Gastrocnemius medialis (tissue), 4 donors: ENCODE measurements at regions of chr10 and their contacts with region 1.

Region 1: GRCh38 chr10:4663162-4663904 is 162.7 kb upstream of the AKR1E2 start:
- DNase-seq: peak; percentile 94 to 95
- ATAC-seq: peak; percentile 78 to 83
- H3K4me3 ChIP-seq: peak overlapping the region in 3 of 4 donors; percentile 5 to 28 (median 22)
- H3K27ac ChIP-seq: peak overlapping the region; percentile 91 to 99 (median 96)
- H3K4me1 ChIP-seq: peaks cover 41 to 51% of the 10 kb centered on the region in 2 donors
- H3K27me3 ChIP-seq: no peaks in the 10 kb centered on the region
- CTCF ChIP-seq: no peak
- POLR2A ChIP-seq: peak; percentile 66 to 77

Region 2: DNA sequence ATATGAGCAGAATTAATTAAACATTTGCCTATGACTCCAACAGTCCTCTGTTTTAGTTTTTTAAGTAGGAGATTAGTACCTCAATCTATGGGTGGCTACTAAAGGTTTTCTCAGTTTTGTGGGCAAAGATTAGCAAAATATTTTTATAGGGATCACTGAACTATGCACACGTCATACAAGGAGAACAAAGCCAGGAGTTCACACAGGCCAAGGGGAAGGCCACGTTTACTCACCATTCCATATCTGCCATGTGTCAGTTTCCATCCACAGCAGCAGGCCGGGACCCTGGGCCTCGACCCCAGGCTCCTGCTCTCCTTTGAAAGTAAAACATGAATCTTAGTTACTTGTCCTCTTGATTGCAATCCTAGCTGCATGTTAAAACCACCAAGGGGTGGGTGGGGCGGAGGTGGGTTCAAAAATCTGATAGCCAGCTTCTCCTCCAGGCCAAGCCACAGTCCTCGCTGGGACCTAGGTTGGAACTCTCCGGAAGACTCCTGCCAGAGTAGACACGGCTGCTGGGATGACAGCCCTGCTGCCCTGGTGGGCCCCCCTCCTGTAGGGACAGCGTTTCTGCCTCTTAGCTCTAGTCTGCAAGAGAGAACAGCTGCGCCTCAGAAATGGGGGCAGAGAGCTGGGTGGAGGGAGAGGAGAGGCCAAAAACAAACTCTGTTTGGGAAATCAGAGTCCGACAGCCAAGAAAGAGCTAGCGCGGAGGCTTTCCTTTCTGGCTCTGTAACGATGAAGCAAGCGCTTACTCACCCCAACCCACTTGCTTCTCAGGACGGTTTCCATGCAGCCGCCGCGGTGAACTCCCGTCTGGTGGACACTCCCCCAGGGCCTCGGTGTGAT is 1526.3 kb before region 1 on chr10:
- in situ Hi-C with region 1: no loop called
- intact Hi-C with region 1: loop called (anchors 10 kb)
- DNase-seq: peak; percentile 68 to 94
- ATAC-seq: peak; percentile 90 to 95
- H3K4me3 ChIP-seq: peak overlapping the region; percentile 5 to 26 (median 15)
- H3K27ac ChIP-seq: peak overlapping the region; percentile 81 to 94 (median 87)
- H3K4me1 ChIP-seq: peaks cover 21 to 22% of the 10 kb centered on the region in 2 donors
- H3K27me3 ChIP-seq: no peaks in the 10 kb centered on the region
- CTCF ChIP-seq: no peak
- POLR2A ChIP-seq: peak in 1 of 2 donors; percentile 36

Region 3: GRCh38 chr10:3570855-3571266 is 1092.5 kb before region 1 on chr10:
- in situ Hi-C with region 1: no loop called
- intact Hi-C with region 1: loop called (anchors 2 kb)
- DNase-seq: peak; percentile 15 to 65
- ATAC-seq: peak in 1 of 2 donors; percentile 29
- H3K4me3 ChIP-seq: no peak overlapping the region
- H3K27ac ChIP-seq: peak overlapping the region; percentile 16 to 63 (median 36)
- H3K4me1 ChIP-seq: peaks cover 42 to 63% of the 10 kb centered on the region in 2 donors
- H3K27me3 ChIP-seq: no peaks in the 10 kb centered on the region
- CTCF ChIP-seq: no peak
- POLR2A ChIP-seq: no peak

Region 4: DNA sequence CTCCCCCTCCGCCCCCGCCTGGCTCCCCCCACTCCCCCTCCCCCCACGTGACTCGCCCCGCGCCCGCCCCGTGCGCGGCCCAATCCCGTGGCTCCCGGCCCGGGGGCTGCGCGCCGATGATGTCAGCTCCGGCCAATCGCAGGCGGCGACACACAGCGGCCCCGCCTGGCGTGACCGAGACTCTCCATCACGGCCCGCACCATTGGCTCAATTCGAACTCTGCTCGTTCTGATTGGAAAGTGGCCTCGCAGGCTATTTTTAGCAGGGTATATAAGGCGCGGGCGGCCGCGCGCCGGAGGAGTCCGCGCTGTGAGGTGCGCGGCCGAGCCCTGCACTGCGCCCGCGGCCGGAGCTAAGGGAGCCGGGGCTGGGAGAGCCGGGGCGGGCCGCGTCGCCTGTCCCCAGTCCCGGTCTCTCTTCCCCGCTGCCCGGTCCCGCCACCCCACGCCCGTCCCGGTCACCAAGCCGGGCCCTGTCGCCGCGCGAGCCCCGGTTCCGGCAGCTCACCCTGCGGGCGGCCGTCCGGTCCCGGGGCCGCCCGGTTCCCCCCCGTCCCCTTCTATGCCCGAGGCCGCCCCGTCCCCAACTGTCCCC is 878.0 kb before region 1 on chr10:
- in situ Hi-C with region 1: loop called in 1 of 4 experiments (anchors 5 kb)
- intact Hi-C with region 1: loop called (anchors 2 kb)
- DNase-seq: peak; percentile 99
- ATAC-seq: peak; percentile 55 to 62
- H3K4me3 ChIP-seq: peak overlapping the region; percentile 83 to 94 (median 90)
- H3K27ac ChIP-seq: peak overlapping the region; percentile 97 to 100 (median 100)
- H3K4me1 ChIP-seq: peaks cover 11 to 18% of the 10 kb centered on the region in 2 donors
- H3K27me3 ChIP-seq: no peaks in the 10 kb centered on the region
- CTCF ChIP-seq: peak in 2 of 5 experiments; percentile 14 to 34
- POLR2A ChIP-seq: peak; percentile 100

Region 5: DNA sequence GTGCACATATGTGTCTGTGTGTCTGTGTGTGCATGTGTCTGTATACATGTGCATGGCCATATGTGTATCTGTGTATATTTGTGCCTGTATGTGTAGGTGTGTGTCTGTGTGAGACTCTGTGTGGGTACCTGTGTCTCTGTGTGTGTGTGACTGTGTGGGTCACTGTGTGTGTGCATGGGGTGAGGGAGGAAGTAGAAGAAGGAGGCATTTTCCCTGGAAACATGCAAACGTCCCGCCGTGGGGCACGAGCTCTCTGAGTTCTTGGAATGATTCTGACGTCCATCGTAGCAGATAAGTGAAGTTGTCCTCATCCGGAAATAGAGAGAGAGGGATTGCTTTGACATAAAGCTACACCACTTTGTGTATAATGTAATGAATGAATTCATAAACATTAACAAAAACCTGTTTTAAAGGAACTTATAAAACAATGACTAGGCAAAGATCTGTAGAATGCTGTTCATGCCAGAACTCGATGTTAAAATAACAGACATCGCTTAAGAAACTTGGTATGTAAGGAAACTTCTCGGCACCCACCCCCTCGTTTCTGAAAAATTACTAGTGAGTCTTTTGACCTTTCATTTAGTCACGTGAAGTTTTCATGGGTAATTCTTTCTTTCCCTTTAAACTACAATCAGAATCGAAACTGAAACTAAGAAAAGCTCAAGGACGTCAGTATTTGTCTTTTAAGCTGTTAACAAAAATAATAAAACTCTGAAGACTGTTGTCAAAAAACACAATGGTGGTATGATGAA is 834.8 kb before region 1 on chr10:
- in situ Hi-C with region 1: loop called in 1 of 4 experiments (anchors 25 kb)
- intact Hi-C with region 1: loop called (anchors 5 kb)
- DNase-seq: no peak
- ATAC-seq: no peak
- H3K4me3 ChIP-seq: peak overlapping the region; percentile 50 to 62 (median 58)
- H3K27ac ChIP-seq: peak overlapping the region; percentile 73 to 92 (median 89)
- H3K4me1 ChIP-seq: peaks cover 33 to 36% of the 10 kb centered on the region in 2 donors
- H3K27me3 ChIP-seq: no peaks in the 10 kb centered on the region
- CTCF ChIP-seq: no peak
- POLR2A ChIP-seq: no peak

Region 6: GRCh38 chr10:4120096-4120853 is 543.1 kb before region 1 on chr10:
- in situ Hi-C with region 1: no loop called
- intact Hi-C with region 1: no loop called
- DNase-seq: no peak
- ATAC-seq: no peak
- H3K4me3 ChIP-seq: no peak overlapping the region
- H3K27ac ChIP-seq: no peak overlapping the region
- H3K4me1 ChIP-seq: no peaks in the 10 kb centered on the region
- H3K27me3 ChIP-seq: no peaks in the 10 kb centered on the region
- CTCF ChIP-seq: no peak
- POLR2A ChIP-seq: no peak

Region 7: DNA sequence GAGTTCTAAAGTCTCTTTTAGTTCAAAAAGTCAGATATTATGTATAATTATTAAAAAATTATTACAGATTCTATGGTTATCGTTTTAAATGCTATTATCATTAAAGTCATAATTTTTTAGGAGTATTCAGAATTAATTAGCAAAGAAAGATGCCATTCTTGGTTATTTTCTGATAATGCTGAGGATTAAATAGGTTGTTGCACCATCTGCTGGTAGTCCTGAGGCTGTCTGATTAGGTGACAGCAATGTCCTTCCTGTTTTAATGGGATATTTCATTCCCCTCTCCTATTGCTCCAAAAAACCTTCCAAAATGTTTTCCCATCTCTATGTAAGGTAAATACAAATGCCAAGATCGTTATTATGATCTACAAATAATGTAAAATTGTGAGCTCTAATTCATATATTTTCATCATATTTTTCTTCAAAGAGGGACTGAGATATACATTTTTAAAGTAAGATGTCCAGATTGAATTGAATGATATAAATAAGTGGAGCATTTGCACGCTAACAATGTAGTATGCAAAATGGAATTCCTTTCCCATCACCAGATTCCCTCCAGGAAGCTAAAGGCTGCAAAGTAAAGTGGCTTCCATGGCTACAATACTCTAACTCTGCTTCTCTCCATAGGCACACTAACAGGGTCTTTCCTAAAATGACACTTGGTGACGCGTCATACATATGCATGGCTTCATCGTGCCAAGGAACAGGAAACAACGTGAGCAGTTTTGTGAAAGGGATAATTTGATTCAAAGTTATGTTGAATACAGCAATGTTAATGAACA is 103.9 kb after region 1 on chr10:
- in situ Hi-C with region 1: loop called in 2 of 4 experiments (anchors 5 to 10 kb)
- intact Hi-C with region 1: loop called (anchors 1 kb)
- DNase-seq: no peak
- ATAC-seq: peak; percentile 74 to 76
- H3K4me3 ChIP-seq: no peak overlapping the region
- H3K27ac ChIP-seq: peak overlapping the region; percentile 27 to 65 (median 56)
- H3K4me1 ChIP-seq: peaks cover 39 to 50% of the 10 kb centered on the region in 2 donors
- H3K27me3 ChIP-seq: no peaks in the 10 kb centered on the region
- CTCF ChIP-seq: peak; percentile 60 to 76 (median 64)
- POLR2A ChIP-seq: no peak